A549 (cell line): ENCODE measurements at regions of chr5 and their contacts with region 1.

Region 1: DNA sequence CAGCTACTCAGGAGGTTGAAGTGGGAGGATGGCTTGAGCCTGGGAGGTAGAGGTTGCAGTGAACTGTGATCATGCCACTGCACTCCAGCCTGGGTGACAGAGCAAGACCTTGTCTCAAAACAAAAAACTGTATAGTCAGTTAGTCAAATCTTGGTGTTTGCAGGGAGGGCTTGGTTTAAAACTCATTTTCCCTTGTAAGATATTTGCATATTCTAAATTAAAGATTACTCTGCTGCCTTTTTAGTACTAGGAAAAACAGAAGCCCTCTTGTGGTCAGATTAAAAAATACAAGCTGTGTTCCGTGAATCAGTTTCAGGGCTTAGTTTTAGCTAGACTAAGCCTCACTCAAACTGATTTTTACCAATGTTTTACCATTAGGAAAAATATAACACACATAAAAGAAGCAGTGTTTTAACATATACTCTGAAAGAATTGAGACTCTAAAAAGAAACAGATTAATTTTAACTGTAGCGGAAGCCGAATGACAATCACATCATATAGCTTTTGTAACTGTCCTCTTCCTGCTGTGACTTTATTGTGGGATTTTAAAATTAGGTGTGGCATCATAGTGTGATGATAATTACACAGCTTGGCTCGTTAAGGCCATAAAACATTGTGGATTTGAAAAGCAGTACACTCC is 84.9 kb upstream of the BASP1 start:
- DNase-seq: peak; percentile 37 to 48
- ATAC-seq: 0 out of 6 replicates have a peak, but pooled peaks of 1 of the 2 experiments have one; percentile 25
- H3K4me3 ChIP-seq: no peak overlapping the region
- H3K27ac ChIP-seq: peak overlapping the region; percentile 20 to 67; a peak in 4 of 6 replicates
- H3K4me1 ChIP-seq: peaks cover 25% of the 10 kb centered on the region
- CTCF ChIP-seq: peak; percentile 73
- EP300 ChIP-seq: no peak
- POLR2A ChIP-seq: no peak
- RAD21 ChIP-seq: peak; percentile 59 to 68

Region 2: DNA sequence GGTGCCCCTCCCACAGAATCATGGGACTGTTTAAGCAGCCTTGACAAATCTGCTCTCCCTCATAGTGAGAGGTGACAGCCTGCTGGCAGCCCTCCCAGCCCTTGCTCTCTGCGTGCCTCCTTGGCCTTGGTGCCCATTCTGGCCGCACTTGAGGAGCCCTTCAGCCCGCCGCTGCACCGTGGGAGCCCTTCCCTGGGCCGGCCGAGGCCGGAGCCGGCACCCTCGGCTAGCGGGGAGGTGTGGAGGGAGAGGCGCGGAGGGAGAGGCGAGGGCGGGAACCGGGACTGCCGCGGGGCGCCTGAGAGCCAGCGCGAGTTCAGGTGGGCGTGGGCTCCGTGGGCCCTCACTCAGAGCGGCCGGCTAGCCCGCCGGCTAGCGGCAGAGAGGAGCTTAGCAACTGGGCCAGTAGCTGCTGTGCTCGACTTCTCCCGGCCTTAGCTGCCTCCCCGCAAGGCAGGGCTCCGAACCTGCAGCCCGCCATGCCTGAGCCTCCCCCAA is 70.5 kb before region 1 on chr5:
- CTCF ChIA-PET with region 1: interaction called, 18 read pairs
- POLR2A ChIA-PET with region 1: no interaction called
- DNase-seq: peak; percentile 52 to 82
- ATAC-seq: peak; percentile 98 to 100
- H3K4me3 ChIP-seq: peak overlapping the region; percentile 42
- H3K27ac ChIP-seq: peak overlapping the region; percentile 80 to 89
- H3K4me1 ChIP-seq: peaks cover 32% of the 10 kb centered on the region
- CTCF ChIP-seq: peak; percentile 60
- EP300 ChIP-seq: no peak
- POLR2A ChIP-seq: no peak
- RAD21 ChIP-seq: peak; percentile 63 to 75

Region 3: DNA sequence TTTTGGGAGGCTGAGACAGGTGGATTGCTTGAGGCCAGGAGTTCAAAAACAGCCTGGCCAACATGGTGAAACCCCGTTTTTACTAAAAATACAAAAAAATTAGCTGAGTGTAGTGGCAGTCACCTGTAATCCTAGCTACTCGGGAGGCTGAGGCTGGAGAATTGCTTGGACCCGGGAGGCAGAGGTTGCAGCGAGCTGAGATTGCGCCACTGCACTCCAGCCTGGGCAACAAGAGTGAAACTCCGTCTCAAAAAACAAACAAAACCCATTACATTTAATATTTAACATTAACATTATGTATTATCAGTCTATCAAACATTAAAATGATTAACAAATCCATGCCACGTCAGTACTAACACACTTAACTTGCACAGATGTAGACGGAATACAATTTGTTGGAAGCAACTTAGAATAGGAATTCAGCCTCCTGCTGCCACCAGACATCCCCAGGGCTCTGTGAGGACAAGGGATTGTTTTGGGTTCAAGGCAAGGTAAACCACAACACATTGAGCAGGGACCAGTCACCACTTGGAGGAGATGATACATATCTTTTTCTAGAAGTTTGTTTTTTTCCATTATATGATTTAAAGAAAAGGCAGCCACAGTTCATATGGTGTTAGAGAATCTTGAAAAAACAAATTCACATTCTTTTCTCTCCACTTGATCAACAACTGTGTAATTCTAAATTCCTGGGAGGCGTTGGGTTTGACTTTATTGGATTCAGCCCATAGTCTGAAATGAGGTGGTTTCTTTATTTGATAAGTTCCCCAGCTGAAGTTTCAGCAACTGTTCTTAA is 19.2 kb before region 1 on chr5:
- CTCF ChIA-PET with region 1: interaction called, 24 read pairs
- POLR2A ChIA-PET with region 1: no interaction called
- DNase-seq: peak; percentile 55 to 95
- ATAC-seq: peak; percentile 86 to 88
- H3K4me3 ChIP-seq: peak overlapping the region; percentile 7; the same call in 1 of the 3 replicates
- H3K27ac ChIP-seq: peak overlapping the region; percentile 76 to 92
- H3K4me1 ChIP-seq: peaks cover 68% of the 10 kb centered on the region
- CTCF ChIP-seq: no peak
- EP300 ChIP-seq: peak; percentile 67 to 89; a peak in 3 of 5 replicates
- POLR2A ChIP-seq: no peak
- RAD21 ChIP-seq: peak; percentile 17 to 36

Region 4: DNA sequence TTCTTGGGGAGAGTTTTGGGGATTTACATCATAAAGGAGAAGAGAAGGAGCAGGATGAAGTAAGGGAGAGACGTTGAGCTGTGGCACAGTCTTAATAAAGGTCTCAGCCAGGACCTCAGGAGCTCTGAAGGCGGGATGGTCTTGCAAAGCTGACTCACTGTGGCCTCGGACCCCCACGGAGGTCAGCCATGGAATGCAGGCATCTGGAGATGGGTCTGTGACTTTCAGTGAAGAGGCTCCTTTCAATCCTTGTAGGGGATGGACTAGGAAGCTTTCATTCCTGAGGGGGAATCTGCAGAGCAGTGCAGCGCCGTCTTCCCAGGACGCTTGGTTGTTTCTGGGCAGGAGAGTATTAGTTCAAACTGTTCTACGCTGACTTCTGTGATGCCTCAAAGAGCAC is 19.1 kb after region 1 on chr5:
- CTCF ChIA-PET with region 1: interaction called, 32 read pairs
- POLR2A ChIA-PET with region 1: no interaction called
- DNase-seq: no peak
- ATAC-seq: no peak; a peak in 1 of 6 replicates
- H3K4me3 ChIP-seq: no peak overlapping the region
- H3K27ac ChIP-seq: peak overlapping the region in 1 of 2 experiments; percentile 45; a peak in 1 of 6 replicates
- H3K4me1 ChIP-seq: peaks cover 12% of the 10 kb centered on the region
- CTCF ChIP-seq: no peak
- EP300 ChIP-seq: no peak
- POLR2A ChIP-seq: no peak
- RAD21 ChIP-seq: no peak

Region 5: DNA sequence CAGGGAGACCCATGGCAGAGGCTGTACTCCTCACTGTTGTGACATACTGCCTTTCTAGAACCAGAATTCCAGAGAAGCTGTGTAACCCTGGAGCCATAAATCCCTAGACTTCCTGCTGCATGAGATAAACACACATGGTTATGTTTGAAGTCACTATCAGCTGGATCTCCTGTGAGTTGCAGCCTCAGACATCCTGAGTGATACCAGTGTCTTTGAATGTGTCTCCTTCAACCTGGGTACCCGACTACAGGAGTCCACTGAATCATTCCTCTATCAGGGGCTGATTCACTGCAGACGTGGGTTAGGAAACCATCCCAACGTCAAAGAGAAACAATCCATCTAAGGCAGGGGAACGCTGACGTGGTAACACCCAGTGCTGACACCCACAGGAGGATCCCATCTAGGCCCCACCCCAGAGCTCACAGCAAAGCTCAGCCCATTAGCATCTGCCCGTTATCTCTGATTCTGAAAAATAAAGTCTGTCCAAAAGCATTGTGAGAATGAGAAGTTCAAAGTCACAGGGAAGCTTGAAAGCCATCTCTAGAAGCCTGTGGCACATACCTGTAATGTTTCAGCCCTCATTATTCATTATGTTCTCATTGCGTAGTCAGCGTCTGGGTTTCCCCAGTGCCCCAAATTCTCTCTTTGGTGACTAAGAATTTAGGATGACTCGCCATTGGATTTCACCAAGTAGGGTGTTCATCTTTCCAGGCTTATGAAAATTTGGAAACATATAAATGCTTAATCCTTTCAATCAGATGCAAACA is 48.6 kb after region 1 on chr5:
- CTCF ChIA-PET with region 1: interaction called, 21 read pairs
- POLR2A ChIA-PET with region 1: no interaction called
- DNase-seq: peak; percentile 72 to 95
- ATAC-seq: peak; percentile 96 to 99
- H3K4me3 ChIP-seq: no peak overlapping the region
- H3K27ac ChIP-seq: peak overlapping the region; percentile 69 to 87
- H3K4me1 ChIP-seq: peaks cover 44% of the 10 kb centered on the region
- CTCF ChIP-seq: no peak
- EP300 ChIP-seq: peak; percentile 83 to 93; a peak in 4 of 5 replicates
- POLR2A ChIP-seq: no peak
- RAD21 ChIP-seq: peak; percentile 29 to 30; a peak in 1 of 5 replicates

Region 6: GRCh38 chr5:17336065-17336464 is 203.5 kb after region 1 on chr5:
- CTCF ChIA-PET with region 1: no interaction called
- POLR2A ChIA-PET with region 1: no interaction called
- DNase-seq: no peak
- ATAC-seq: no peak
- H3K4me3 ChIP-seq: no peak overlapping the region
- H3K27ac ChIP-seq: no peak overlapping the region
- H3K4me1 ChIP-seq: peaks cover 13% of the 10 kb centered on the region
- CTCF ChIP-seq: no peak
- EP300 ChIP-seq: no peak
- POLR2A ChIP-seq: no peak
- RAD21 ChIP-seq: no peak